Naive thymus-derived CD4-positive, alpha-beta T cell (primary cell): ENCODE measurements at regions of chr22 and their contacts with region 1.

Region 1: DNA sequence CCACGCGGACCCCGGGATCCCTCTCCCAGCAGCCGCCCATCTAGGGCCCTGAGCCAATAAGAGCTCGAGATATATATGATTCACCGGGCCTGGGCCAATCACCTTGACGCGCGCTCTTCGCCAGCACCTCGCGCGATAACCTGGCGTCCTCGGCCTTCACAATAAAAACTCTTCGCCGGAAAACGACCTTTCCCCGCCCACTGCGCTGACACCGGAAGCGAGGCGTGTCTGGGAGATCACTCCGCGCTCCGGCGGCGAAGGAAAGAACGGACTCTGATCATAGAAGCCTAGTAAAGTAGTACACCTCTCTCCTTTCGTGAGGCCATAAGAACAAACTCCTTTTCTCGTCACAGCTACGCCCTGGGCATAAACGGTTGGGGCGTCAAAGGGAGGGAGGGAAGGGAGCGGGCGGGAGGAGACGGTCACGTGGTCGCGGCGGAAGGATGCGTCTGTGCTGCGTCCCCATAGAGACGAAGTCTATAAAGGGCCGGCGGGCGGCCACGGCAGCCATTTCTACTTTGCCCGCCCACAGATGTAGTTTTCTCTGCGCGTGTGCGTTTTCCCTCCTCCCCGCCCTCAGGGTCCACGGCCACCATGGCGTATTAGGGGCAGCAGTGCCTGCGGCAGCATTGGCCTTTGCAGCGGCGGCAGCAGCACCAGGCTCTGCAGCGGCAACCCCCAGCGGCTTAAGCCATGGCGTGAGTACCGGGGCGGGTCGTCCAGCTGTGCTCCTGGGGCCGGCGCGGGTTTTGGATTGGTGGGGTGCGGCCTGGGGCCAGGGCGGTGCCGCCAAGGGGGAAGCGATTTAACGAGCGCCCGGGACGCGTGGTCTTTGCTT is at the start of gene ATF4:
- DNase-seq: peak; percentile 88 to 98 (median 96)
- ATAC-seq: peak; percentile 92
- H3K4me3 ChIP-seq: peak within 1 kb of the TSS; percentile 96
- H3K4me3 Mint-ChIP-seq: peak within 1 kb of the TSS; percentile 83 to 99 (median 96)
- H3K27ac ChIP-seq: peak within 1 kb of the TSS; percentile 84
- H3K27ac Mint-ChIP-seq: peak within 1 kb of the TSS; percentile 94 to 100 (median 97)
- H3K4me1 ChIP-seq: peaks cover 27 to 39% of the 10 kb centered on the region in 2 donors
- H3K4me1 Mint-ChIP-seq: peaks cover 29 to 61% (median 48%) of the 10 kb centered on the region in 7 donors
- H3K27me3 ChIP-seq: no peaks in the 10 kb centered on the region
- H3K27me3 Mint-ChIP-seq: peaks cover 0 to 4% (median 0%) of the 10 kb centered on the region in 5 donors
- total RNA-seq, gene ATF4: 235 to 293 (median 244) TPM

Region 2: GRCh38 chr22:39170825-39171622 is 349.2 kb before region 1 on chr22:
- CTCF ChIA-PET with region 1: interaction called, 7 read pairs
- POLR2A ChIA-PET with region 1: interaction called, 5 read pairs
- intact Hi-C with region 1: loop called (anchors 1 to 5 kb)
- DNase-seq: peak; percentile 64 to 94 (median 85)
- ATAC-seq: peak; percentile 85
- H3K4me3 ChIP-seq: peak overlapping the region; percentile 36
- H3K4me3 Mint-ChIP-seq: peak overlapping the region; percentile 58 to 84 (median 76)
- H3K27ac ChIP-seq: peak overlapping the region; percentile 9
- H3K27ac Mint-ChIP-seq: peak overlapping the region; percentile 82 to 98 (median 93)
- H3K4me1 ChIP-seq: peaks cover 39 to 50% of the 10 kb centered on the region in 2 donors
- H3K4me1 Mint-ChIP-seq: peaks cover 21 to 54% (median 48%) of the 10 kb centered on the region in 7 donors
- H3K27me3 ChIP-seq: no peaks in the 10 kb centered on the region
- H3K27me3 Mint-ChIP-seq: peaks cover 0 to 11% (median 0%) of the 10 kb centered on the region in 5 donors

Region 3: DNA sequence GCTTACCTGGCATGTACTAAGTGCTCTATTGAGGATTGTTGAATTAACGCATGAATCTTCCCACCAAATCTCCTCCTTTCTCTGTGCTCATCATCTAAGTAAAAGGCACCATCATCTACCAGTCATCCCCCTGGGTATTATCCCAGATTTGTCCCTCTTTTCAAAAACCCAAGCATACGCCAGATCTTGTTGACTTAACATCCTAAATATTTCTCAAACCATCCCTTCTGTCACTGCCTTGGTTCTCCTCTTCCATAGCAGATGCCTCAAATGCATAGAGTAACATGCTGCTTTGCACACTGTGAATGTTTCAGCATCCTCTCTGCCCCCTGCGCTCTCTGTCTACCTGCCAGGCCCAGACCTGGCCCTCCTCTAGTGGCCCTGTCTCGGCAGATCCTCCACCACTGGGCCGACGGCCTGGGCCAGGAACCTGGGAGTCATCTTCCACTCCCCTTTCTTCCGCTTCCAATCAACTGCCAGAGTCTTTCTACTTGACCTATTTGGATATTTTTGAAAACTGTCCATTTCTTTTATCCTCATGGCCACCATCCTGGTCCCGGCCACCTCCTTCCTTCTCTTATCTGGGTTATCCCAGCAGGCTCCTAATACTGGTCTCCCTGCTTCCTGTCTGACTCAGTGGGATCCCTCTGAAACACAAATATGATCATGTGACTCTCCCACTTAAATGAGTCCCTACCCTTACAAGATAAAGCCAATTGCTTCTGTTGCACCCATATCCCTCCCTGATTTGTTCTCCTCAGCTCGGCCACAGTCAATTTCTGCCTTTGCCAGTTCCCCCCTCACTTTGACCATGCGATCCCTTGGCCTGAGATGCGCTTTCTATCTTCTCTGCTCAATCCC is 124.1 kb before region 1 on chr22:
- CTCF ChIA-PET with region 1: interaction called, 6 read pairs
- POLR2A ChIA-PET with region 1: interaction called, 40 read pairs
- intact Hi-C with region 1: loop called (anchors 1 kb)
- DNase-seq: no peak
- ATAC-seq: no peak
- H3K4me3 ChIP-seq: no peak overlapping the region
- H3K4me3 Mint-ChIP-seq: peak overlapping the region in 1 of 10 donors; percentile 34
- H3K27ac ChIP-seq: no peak overlapping the region
- H3K27ac Mint-ChIP-seq: peak overlapping the region in 2 of 9 donors; percentile 5 to 6
- H3K4me1 ChIP-seq: peaks cover 6 to 9% of the 10 kb centered on the region in 2 donors
- H3K4me1 Mint-ChIP-seq: peaks cover 5 to 19% (median 11%) of the 10 kb centered on the region in 7 donors
- H3K27me3 ChIP-seq: no peaks in the 10 kb centered on the region
- H3K27me3 Mint-ChIP-seq: peaks cover 0 to 2% (median 0%) of the 10 kb centered on the region in 5 donors

Region 4: DNA sequence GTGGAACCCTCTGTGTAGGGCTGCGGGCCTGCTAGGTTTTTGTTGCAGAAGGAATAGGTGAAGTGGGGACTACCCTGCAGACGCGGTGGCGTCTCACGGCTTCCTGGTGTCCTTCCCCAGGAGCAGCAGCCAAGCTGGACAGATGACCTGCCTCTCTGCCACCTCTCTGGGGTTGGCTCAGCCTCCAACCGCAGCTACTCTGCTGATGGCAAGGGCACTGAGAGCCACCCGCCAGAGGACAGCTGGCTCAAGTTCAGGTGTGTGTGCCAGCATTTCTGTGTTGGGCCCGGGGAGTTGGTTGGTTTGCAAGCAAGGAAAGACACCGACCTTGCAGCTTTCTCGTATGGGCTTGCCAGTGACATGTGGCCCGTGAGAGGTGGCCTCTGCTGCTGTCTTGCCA is 105.4 kb before region 1 on chr22:
- CTCF ChIA-PET with region 1: interaction called, 5 read pairs
- POLR2A ChIA-PET with region 1: interaction called, 15 read pairs
- intact Hi-C with region 1: loop called in 1 of 2 experiments (anchors 1 kb)
- DNase-seq: no peak
- ATAC-seq: no peak
- H3K4me3 ChIP-seq: no peak overlapping the region
- H3K4me3 Mint-ChIP-seq: peak overlapping the region; percentile 14 to 78 (median 72)
- H3K27ac ChIP-seq: peak overlapping the region; percentile 38
- H3K27ac Mint-ChIP-seq: peak overlapping the region in 6 of 9 donors; percentile 79 to 93 (median 89)
- H3K4me1 ChIP-seq: peaks cover 12 to 62% of the 10 kb centered on the region in 2 donors
- H3K4me1 Mint-ChIP-seq: peaks cover 41 to 91% (median 67%) of the 10 kb centered on the region in 7 donors
- H3K27me3 ChIP-seq: no peaks in the 10 kb centered on the region
- H3K27me3 Mint-ChIP-seq: no peaks in the 10 kb centered on the region

Region 5: GRCh38 chr22:39502109-39502788 is 18.0 kb before region 1 on chr22 and contains the start of gene MIEF1:
- CTCF ChIA-PET with region 1: interaction called, 8 read pairs
- POLR2A ChIA-PET with region 1: interaction called, 93 read pairs
- intact Hi-C with region 1: loop called (anchors 1 kb)
- DNase-seq: peak; percentile 71 to 95 (median 78)
- ATAC-seq: peak; percentile 99
- H3K4me3 ChIP-seq: peak within 1 kb of the TSS; percentile 59
- H3K4me3 Mint-ChIP-seq: peak within 1 kb of the TSS; percentile 75 to 100 (median 94)
- H3K27ac ChIP-seq: peak within 1 kb of the TSS; percentile 79
- H3K27ac Mint-ChIP-seq: peak within 1 kb of the TSS; percentile 86 to 97 (median 96)
- H3K4me1 ChIP-seq: peaks cover 16 to 21% of the 10 kb centered on the region in 2 donors
- H3K4me1 Mint-ChIP-seq: peaks cover 23 to 57% (median 47%) of the 10 kb centered on the region in 7 donors
- H3K27me3 ChIP-seq: no peaks in the 10 kb centered on the region
- H3K27me3 Mint-ChIP-seq: peaks cover 0 to 7% (median 0%) of the 10 kb centered on the region in 5 donors
- total RNA-seq, gene MIEF1: 17.5 to 42.3 (median 37.3) TPM